Mucosa of descending colon (tissue), 3 donors: ENCODE measurements at regions of chr11 and their contacts with region 1.

Region 1: DNA sequence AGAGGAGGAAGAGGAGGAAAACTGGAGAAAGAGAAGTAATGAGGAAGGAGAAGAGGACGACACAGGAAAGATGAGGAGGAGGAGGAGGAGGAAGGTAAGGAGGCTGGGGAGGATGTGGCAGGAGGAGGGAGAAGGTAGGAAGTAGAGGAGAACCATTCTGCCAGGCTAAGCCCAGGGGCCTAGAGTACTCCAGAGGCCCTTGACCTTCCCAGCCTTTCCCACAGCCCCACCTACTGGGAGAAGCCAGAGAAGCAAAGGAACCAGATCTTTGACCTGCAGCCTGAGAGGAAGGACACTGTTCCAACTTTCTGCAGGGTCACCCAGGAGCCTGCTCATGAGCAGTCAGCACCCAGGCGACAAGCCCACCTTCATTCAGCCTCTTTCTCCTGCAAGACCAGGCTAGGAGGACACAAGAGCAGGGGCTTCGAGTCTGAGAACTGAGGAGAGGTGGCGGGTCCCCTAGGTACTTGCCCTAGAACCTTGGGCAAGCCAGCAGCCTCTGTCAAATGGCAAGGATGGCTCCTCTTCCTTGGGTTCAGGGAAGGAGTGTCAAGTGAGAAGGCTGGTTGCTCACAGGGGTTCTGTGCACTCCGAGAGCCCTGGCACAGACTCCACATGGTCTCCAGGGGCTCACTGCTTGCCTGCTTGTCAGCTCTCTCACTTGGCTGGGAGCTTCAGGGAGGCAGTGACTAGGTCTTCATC is 27.9 kb upstream of the OAF start:
- DNase-seq: peak in 2 of 3 donors; percentile 70 to 86
- ATAC-seq: peak; percentile 45
- H3K4me3 ChIP-seq: no peak overlapping the region
- H3K4me1 ChIP-seq: peaks cover 43% of the 10 kb centered on the region
- CTCF ChIP-seq: peak; percentile 42

Region 2: GRCh38 chr11:120061761-120062560 is 121.0 kb before region 1 on chr11:
- intact Hi-C with region 1: no loop called
- DNase-seq: no peak
- ATAC-seq: no peak
- H3K4me3 ChIP-seq: no peak overlapping the region
- H3K4me1 ChIP-seq: peaks cover 2% of the 10 kb centered on the region
- CTCF ChIP-seq: no peak

Region 3: GRCh38 chr11:120229451-120230424 is 46.8 kb after region 1 on chr11:
- intact Hi-C with region 1: loop called (anchors 5 kb)
- DNase-seq: peak in 2 of 3 donors; percentile 42 to 55
- ATAC-seq: no peak
- H3K4me3 ChIP-seq: no peak overlapping the region
- H3K4me1 ChIP-seq: peaks cover 4% of the 10 kb centered on the region
- CTCF ChIP-seq: peak; percentile 48